GM12878 (cell line): ENCODE measurements at regions of chr12 and their contacts with region 1.

Region 1: GRCh38 chr12:92136965-92137721 is 8.5 kb downstream of the BTG1 start:
- DNase-seq: no peak
- ATAC-seq: peak; percentile 7
- H3K4me3 ChIP-seq: peak overlapping the region; percentile 89
- H3K27ac ChIP-seq: peak overlapping the region; percentile 85
- H3K4me1 ChIP-seq: peaks cover 13% of the 10 kb centered on the region; the same call in 1 of the 2 replicates
- H3K27me3 ChIP-seq: no peaks in the 10 kb centered on the region
- CTCF ChIP-seq: no peak
- EP300 ChIP-seq: no peak
- POLR2A ChIP-seq: no peak
- RAD21 ChIP-seq: no peak

Region 2: DNA sequence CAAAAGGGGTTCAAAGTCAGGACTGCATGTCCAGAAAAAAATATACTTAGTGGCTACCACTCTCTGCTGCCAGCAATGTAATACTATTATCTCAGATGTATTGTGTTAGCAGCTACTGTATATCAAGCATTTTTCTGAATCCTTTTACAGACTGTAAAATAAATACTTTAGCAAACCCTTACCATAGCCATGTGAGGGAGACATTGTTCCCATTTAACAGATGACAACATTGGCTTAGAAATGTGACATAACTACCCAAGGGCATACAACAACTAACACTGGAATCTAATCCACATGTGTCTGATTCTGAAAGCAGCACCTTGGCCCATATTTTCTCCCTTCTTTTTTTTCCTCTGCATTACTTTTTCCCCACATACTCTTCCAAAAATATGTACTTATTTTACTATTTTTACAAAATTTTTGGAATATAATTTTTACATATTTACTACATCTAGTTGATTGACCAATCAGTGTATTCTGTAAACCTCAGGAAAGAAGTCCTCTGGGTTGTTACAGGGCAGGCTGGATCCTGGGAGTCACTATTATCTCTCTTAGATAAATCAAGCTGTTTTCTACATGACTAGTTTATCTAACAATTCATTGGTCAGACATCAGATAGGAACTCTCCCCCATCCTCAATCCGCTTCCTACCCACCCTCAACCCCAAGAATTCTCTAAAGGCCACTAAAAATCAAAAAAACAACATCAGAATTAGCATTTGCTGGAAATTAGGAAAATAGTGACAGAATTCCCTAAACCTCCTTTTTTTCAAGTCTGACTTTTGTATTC is 145.6 kb before region 1 on chr12:
- CTCF ChIA-PET with region 1: interaction called, 12 read pairs
- POLR2A ChIA-PET with region 1: interaction called, 4 read pairs
- RAD21 ChIA-PET with region 1: interaction called, 6 read pairs
- SMC1A ChIA-PET with region 1: interaction called, 37 read pairs
- in situ Hi-C with region 1: no loop called
- intact Hi-C with region 1: loop called (anchors 5 kb)
- DNase-seq: peak; percentile 32
- ATAC-seq: peak; percentile 94
- H3K4me3 ChIP-seq: no peak overlapping the region
- H3K27ac ChIP-seq: no peak overlapping the region
- H3K4me1 ChIP-seq: no peaks in the 10 kb centered on the region
- H3K27me3 ChIP-seq: no peaks in the 10 kb centered on the region
- CTCF ChIP-seq: peak in 2 of 3 experiments; percentile 35 to 56; a peak in 3 of 6 replicates
- EP300 ChIP-seq: no peak
- POLR2A ChIP-seq: no peak
- RAD21 ChIP-seq: peak; percentile 61

Region 3: DNA sequence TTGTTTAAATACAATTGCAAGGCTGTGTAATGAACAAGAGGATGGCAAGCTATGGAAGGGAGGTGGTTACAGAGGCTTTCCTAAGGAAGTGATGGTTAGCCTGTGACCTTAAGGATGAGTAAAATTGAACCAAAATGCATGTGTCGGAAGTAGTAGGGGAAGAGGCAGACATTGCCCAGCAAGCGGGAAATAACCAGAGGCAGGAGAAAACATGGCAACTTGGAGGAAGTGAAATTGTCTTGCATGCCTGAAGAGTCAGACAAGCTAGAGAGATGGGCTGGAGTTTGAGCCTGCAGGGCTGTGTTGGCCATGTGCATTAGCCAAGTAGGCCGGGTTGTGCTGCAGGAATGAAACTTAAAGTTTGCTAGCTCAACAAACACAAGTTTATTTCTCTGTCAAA is 87.7 kb before region 1 on chr12:
- CTCF ChIA-PET with region 1: interaction called, 3 read pairs
- POLR2A ChIA-PET with region 1: interaction called, 6 read pairs
- RAD21 ChIA-PET with region 1: interaction called, 36 read pairs
- SMC1A ChIA-PET with region 1: interaction called, 11 read pairs
- in situ Hi-C with region 1: no loop called
- intact Hi-C with region 1: loop called (anchors 5 kb)
- DNase-seq: peak; percentile 74
- ATAC-seq: peak; percentile 80
- H3K4me3 ChIP-seq: no peak overlapping the region
- H3K27ac ChIP-seq: no peak overlapping the region
- H3K4me1 ChIP-seq: peaks cover 24% of the 10 kb centered on the region
- H3K27me3 ChIP-seq: no peaks in the 10 kb centered on the region
- CTCF ChIP-seq: no peak
- EP300 ChIP-seq: peak in 1 of 2 experiments; percentile 33; a peak in 1 of 4 replicates
- POLR2A ChIP-seq: no peak
- RAD21 ChIP-seq: no peak

Region 4: DNA sequence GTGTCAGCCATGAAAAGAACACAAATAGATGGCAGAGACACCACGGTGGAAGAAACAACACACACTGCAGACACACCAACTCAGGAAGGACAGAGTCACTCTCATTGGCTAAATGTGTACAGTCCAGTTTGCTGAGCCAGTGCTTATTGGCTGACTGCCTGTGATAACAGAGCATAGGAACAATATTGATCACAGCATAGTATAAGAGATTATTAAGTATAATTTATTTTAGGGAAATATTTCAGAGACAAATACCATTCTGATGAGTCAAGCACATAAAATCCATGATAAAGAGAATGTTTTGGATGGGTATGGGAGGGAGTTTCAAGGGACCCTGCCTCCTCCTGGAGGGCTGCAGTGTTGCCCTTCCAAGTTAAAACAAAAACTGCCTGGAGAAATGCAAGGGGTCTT is 42.4 kb before region 1 on chr12:
- CTCF ChIA-PET with region 1: interaction called, 4 read pairs
- POLR2A ChIA-PET with region 1: no interaction called
- RAD21 ChIA-PET with region 1: interaction called, 5 read pairs
- SMC1A ChIA-PET with region 1: interaction called, 13 read pairs
- in situ Hi-C with region 1: no loop called
- intact Hi-C with region 1: no loop called
- DNase-seq: no peak
- ATAC-seq: peak; percentile 50
- H3K4me3 ChIP-seq: no peak overlapping the region
- H3K27ac ChIP-seq: no peak overlapping the region
- H3K4me1 ChIP-seq: peaks cover 5% of the 10 kb centered on the region
- H3K27me3 ChIP-seq: no peaks in the 10 kb centered on the region
- CTCF ChIP-seq: no peak
- EP300 ChIP-seq: no peak
- POLR2A ChIP-seq: no peak
- RAD21 ChIP-seq: no peak

Region 5: DNA sequence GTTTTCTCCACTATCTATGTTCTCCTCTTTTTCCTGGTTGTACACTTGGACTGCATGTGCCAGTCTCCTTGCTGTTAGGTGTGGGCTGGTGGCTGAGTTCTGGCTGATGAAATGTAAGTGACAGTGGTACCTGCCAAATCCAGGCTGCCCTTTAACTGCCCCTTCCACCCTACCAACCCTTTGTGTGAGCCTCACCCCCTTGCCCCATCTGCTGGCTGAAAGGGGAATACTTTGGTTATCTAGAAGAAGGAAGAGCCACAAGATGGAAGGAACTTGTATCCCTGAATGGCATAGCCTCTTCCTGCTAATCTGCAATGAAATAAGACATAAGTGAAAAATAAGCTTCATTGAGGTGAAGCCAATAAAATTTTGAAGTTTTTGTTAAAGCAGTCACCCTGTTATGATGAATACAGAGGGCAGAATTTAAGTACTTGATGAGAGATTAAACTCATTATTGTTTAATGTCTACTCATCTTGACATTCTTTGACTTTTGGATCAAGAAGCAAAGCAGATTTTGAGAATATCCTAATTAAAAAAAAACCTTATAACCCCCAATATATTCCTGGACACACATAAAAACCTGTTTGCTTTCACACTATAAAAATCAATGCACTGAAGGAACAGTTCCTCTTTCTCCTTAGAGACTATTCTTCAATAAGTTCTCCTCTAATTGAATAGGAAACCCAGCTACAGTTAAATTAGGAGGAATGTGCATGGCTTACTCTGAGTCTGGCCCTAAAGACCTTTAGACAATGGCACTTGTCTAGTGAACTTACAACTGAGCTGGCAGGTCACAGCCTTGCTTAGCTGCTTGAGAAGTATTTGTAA is 271.1 kb after region 1 on chr12:
- CTCF ChIA-PET with region 1: interaction called, 6 read pairs
- POLR2A ChIA-PET with region 1: interaction called, 3 read pairs
- RAD21 ChIA-PET with region 1: interaction called, 17 read pairs
- SMC1A ChIA-PET with region 1: interaction called, 24 read pairs
- in situ Hi-C with region 1: no loop called
- intact Hi-C with region 1: no loop called
- DNase-seq: no peak
- ATAC-seq: peak; percentile 74
- H3K4me3 ChIP-seq: no peak overlapping the region
- H3K27ac ChIP-seq: peak overlapping the region; percentile 24
- H3K4me1 ChIP-seq: peaks cover 31% of the 10 kb centered on the region
- H3K27me3 ChIP-seq: no peaks in the 10 kb centered on the region
- CTCF ChIP-seq: peak; percentile 58 to 82 (median 72)
- EP300 ChIP-seq: no peak
- POLR2A ChIP-seq: no peak
- RAD21 ChIP-seq: peak; percentile 94

Region 6: DNA sequence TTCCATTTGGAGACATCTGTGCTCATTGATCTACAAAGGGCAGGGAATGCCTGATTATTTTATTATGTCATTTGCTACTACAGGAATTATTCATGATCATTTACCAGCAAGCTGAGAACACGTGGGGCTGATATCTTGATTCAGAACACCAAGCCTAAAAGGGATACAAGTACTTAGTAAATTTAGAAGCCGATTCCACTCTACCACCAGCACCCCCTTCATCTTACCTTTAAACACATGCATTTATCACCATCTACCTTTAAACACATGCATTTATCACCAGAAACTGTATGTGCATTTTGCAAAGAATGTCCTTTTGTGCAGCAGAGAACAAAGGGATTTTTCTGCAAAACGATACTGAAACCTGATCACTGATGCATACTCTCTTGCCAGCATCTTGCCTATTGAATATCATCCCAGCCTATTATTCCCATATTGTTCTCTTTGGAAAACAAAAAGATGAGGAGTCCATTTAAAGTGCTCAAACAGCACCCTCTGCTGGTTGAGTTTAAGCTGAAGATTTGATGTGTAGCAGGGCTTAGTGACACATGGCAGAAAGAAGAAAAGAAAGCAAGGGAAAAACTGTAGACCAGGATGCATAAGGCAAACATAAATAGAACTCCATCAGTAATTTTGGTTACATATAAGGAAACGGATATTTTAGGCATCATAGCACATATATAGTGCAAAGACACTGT is 433.1 kb after region 1 on chr12:
- CTCF ChIA-PET with region 1: interaction called, 21 read pairs
- POLR2A ChIA-PET with region 1: interaction called, 3 read pairs
- RAD21 ChIA-PET with region 1: interaction called, 67 read pairs
- SMC1A ChIA-PET with region 1: interaction called, 20 read pairs
- in situ Hi-C with region 1: no loop called
- intact Hi-C with region 1: loop called (anchors 2 kb)
- DNase-seq: peak; percentile 93
- ATAC-seq: peak; percentile 94
- H3K4me3 ChIP-seq: no peak overlapping the region
- H3K27ac ChIP-seq: peak overlapping the region; percentile 55
- H3K4me1 ChIP-seq: peaks cover 11% of the 10 kb centered on the region; the same call in 1 of the 2 replicates
- H3K27me3 ChIP-seq: no peaks in the 10 kb centered on the region
- CTCF ChIP-seq: peak; percentile 47 to 76 (median 48); a peak in 5 of 6 replicates
- EP300 ChIP-seq: no peak
- POLR2A ChIP-seq: no peak
- RAD21 ChIP-seq: peak; percentile 81